Activated naive CD4-positive, alpha-beta T cell treated with anti-CD3 and anti-CD28 coated beads for 36 hours (primary cell): ENCODE measurements at regions of chr3 and their contacts with region 1.

Region 1: GRCh38 chr3:46488735-46489361 is 8.9 kb upstream of the RTP3 start:
- DNase-seq: peak; percentile 98
- H3K4me3 Mint-ChIP-seq: peak overlapping the region; percentile 21
- H3K27ac Mint-ChIP-seq: no peak overlapping the region
- H3K4me1 Mint-ChIP-seq: peaks cover 15% of the 10 kb centered on the region
- H3K27me3 Mint-ChIP-seq: peaks cover 4% of the 10 kb centered on the region

Region 2: DNA sequence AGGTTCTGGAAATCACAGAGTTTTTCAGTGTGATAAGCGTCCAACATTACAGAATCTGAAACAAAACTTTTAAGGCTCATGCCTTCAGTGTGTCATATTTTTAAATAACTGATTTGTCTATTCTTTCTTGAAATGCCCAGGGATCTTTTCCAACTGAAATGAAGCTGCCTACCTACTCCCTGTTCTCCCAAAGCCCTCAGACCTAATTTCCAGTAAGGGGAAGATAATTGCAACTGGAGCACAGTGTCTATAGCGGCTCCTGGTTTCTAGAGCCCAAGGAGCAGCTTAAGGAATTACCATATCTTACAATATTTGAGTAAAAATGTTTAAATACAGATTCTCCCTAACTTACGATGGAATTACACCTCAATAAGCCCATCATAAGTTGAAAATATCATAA is 44.2 kb after region 1 on chr3:
- CTCF ChIA-PET with region 1: interaction called, 23 read pairs
- intact Hi-C with region 1: no loop called
- DNase-seq: no peak
- H3K4me3 Mint-ChIP-seq: no peak overlapping the region
- H3K27ac Mint-ChIP-seq: no peak overlapping the region
- H3K4me1 Mint-ChIP-seq: peaks cover 27% of the 10 kb centered on the region
- H3K27me3 Mint-ChIP-seq: no peaks in the 10 kb centered on the region

Region 3: GRCh38 chr3:46549408-46549904 is 60.6 kb after region 1 on chr3:
- CTCF ChIA-PET with region 1: interaction called, 22 read pairs
- intact Hi-C with region 1: no loop called
- DNase-seq: peak; percentile 35
- H3K4me3 Mint-ChIP-seq: no peak overlapping the region
- H3K27ac Mint-ChIP-seq: no peak overlapping the region
- H3K4me1 Mint-ChIP-seq: peaks cover 16% of the 10 kb centered on the region
- H3K27me3 Mint-ChIP-seq: no peaks in the 10 kb centered on the region

Region 4: DNA sequence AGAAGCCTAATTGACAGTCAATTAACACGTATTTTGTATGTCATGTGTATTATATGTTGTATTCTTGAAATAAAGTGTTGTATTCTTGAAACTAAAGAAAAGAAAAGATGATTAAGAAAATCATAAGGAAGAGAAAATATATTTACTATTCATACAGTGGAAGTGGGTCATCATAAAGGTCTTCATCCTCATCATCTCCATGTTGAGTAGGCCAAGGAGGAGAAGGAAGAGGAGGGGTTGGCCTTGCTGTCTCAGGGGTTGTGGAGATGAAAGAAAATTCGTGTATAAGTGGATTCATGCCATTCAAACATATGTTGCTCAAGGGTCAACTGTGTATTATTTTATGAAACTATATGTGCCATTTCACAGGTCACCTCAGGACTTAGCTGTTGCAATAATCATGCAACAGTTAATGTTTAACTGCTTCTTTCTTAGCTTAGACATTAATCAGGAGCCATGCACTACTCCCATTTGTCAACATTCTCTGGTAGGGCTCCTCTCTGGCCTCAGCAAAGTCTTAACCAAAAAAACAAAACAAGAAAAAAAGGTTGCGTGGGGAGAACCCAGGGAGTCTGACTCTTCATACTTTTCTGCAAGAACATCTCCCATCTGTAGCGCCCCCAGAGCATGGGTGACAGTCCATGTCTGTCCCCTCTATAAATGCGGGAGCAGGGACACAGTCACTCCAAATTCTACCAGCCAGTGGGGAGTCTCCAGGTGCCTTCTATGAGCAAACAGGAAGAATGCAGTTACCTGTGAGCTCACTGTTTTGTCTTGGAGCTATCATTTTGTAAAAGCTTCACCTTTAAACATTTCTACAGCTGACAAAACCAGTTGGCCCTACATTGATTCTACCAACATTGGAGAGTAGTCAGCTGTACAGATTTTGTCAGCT is 97.2 kb after region 1 on chr3:
- CTCF ChIA-PET with region 1: interaction called, 20 read pairs
- intact Hi-C with region 1: no loop called
- DNase-seq: no peak
- H3K4me3 Mint-ChIP-seq: no peak overlapping the region
- H3K27ac Mint-ChIP-seq: no peak overlapping the region
- H3K4me1 Mint-ChIP-seq: peaks cover 3% of the 10 kb centered on the region
- H3K27me3 Mint-ChIP-seq: no peaks in the 10 kb centered on the region

Region 5: DNA sequence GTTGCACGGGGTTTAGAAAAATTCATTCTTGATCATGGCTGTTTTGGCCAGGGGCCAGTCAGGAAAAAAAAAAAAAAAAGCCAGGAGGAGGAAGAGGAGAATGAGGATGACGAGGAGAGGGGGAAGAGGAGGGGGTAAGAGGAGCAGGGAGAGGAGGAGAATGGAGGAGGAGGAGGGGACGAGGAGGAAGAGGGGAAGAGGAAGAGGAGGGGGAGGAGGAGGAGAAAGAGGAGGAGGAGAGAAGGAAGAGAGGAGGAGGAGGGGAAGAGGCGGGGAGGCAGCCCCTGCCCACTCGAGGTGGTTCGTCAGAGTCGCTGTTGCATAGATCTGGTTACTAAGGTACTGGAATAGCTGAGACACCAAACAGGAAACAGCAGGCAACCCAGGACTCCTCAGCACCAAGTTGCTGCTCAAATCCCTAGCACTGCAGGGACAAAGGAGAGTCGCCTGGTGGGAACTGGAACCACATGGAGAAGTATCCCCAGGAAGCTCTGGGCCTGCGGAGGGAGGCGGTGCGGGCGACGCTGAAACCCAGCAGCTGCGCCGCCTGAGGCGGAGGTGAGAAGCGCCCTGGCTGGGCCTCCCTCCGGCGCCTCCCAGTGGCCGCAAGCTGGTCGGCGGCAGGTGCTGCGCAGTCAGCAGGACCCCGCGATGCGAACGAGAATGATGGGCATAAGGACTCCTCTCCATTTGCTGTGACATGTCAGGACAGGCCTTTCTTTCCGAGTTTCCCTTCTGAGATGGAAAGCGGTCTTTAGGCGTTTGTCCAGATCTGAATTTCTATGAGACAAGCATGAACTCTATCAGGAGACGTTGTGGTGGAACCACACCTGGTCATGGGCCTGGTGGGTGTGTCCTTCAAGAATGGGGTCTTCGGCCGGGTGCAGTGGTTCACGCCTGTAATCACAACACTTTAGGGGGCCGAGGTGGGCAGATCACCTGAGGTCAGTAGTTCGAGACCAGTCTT is 141.0 kb after region 1 on chr3:
- CTCF ChIA-PET with region 1: interaction called, 181 read pairs
- intact Hi-C with region 1: loop called (anchors 1 kb)
- DNase-seq: peak; percentile 82
- H3K4me3 Mint-ChIP-seq: peak overlapping the region; percentile 48
- H3K27ac Mint-ChIP-seq: peak overlapping the region; percentile 41
- H3K4me1 Mint-ChIP-seq: peaks cover 17% of the 10 kb centered on the region
- H3K27me3 Mint-ChIP-seq: no peaks in the 10 kb centered on the region

Region 6: DNA sequence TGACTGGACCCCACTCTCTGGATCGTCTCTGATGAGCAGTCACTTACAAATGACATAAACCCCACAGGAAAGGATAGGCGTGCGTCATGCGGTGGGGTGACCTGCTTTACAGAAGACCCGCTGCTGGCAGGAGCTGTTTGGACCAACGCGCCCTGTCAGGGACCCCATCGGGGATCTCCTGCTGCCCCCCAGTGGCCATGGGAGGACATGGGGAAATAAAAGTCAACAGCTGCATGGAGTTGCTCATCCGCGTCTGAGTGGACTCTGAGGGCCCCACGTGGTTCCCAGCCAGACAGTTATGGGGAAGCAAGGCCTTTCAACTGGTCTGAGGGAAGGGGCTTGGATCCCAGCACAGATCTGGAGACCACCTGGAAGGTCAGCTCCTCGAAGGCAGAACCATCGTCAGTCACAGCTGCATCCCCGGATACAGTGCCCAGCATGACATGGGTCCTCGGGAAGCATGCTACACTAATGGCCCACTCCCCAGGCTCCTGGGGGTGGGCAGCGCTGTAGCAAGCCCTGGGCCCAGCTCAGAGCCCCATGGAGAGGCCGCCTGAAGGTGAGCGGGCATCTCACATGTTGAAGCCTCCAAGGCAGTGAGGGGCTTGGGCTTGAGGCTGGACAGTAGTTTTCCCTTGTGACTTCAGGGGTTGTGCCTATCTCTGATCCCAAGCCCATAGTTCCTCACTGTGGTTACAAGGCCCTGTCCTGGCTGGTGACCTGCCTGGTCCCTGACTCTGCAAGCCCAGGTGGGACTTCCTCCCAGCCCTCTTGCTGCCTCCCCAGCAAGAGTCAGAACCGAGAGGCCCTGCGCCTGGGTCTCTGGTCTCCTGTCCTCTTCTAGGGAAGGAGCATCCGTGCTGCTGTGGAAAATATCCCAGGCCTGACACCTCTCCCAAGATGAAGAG is 420.9 kb after region 1 on chr3:
- CTCF ChIA-PET with region 1: no interaction called
- intact Hi-C with region 1: loop called (anchors 5 kb)
- DNase-seq: peak; percentile 91
- H3K4me3 Mint-ChIP-seq: no peak overlapping the region
- H3K27ac Mint-ChIP-seq: no peak overlapping the region
- H3K4me1 Mint-ChIP-seq: peaks cover 10% of the 10 kb centered on the region
- H3K27me3 Mint-ChIP-seq: no peaks in the 10 kb centered on the region